ENCODE measurements at regions of chr1 and their contacts with region 1.

Region 1: GRCh38 chr1:47179017-47179987 is 10.5 kb downstream of the PDZK1IP1 start:
- DNase-seq: peak; percentile 91
- H3K4me3 Mint-ChIP-seq: peak overlapping the region; percentile 74
- H3K27ac Mint-ChIP-seq: no peak overlapping the region
- H3K4me1 Mint-ChIP-seq: peaks cover 8% of the 10 kb centered on the region
- H3K27me3 Mint-ChIP-seq: peaks cover 29% of the 10 kb centered on the region

Region 2: GRCh38 chr1:47059376-47059775 is 119.9 kb before region 1 on chr1:
- CTCF ChIA-PET with region 1: no interaction called
- POLR2A ChIA-PET with region 1: no interaction called
- intact Hi-C with region 1: no loop called
- DNase-seq: no peak
- H3K4me3 Mint-ChIP-seq: no peak overlapping the region
- H3K27ac Mint-ChIP-seq: no peak overlapping the region
- H3K4me1 Mint-ChIP-seq: peaks cover 4% of the 10 kb centered on the region
- H3K27me3 Mint-ChIP-seq: peaks cover 32% of the 10 kb centered on the region

Region 3: GRCh38 chr1:47192458-47193384 is 13.4 kb after region 1 on chr1:
- CTCF ChIA-PET with region 1: interaction called, 109 read pairs
- POLR2A ChIA-PET with region 1: interaction called, 6 read pairs
- intact Hi-C with region 1: no loop called
- DNase-seq: peak; percentile 78
- H3K4me3 Mint-ChIP-seq: no peak overlapping the region
- H3K27ac Mint-ChIP-seq: no peak overlapping the region
- H3K4me1 Mint-ChIP-seq: peaks cover 3% of the 10 kb centered on the region
- H3K27me3 Mint-ChIP-seq: peaks cover 5% of the 10 kb centered on the region

Region 4: DNA sequence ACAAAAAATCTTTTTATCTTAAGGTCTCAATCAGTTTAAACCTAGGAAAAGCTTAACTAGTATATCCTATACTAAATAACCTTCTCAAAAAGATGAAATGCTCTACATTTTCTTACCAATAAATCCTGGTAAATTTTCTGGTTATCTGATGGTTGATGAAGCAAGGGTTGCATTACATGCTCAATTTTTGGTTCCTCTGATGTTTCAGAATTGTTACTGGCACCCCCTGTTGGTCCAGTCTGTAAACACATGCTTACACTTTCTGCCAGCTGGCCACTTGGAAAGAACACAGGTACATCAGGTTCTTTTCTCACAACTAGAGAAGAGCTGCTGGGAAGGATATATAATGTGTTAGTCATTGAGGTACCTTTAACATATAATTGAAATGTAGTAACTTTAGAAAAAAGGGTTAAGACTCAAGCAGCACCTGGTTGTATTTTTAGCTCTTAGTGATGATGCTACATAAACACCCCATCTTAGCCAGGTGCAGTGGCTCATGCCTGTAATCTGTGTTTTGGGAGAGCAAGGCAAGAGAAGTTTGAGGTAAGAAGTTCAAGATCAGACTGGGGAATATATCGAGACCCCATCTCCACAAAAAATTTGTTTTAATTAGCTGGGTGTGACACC is 83.6 kb after region 1 on chr1:
- CTCF ChIA-PET with region 1: interaction called, 68 read pairs
- POLR2A ChIA-PET with region 1: no interaction called
- intact Hi-C with region 1: loop called (anchors 1 kb)
- DNase-seq: peak; percentile 46
- H3K4me3 Mint-ChIP-seq: no peak overlapping the region
- H3K27ac Mint-ChIP-seq: no peak overlapping the region
- H3K4me1 Mint-ChIP-seq: no peaks in the 10 kb centered on the region
- H3K27me3 Mint-ChIP-seq: no peaks in the 10 kb centered on the region

Region 5: GRCh38 chr1:47313915-47314664 is 134.8 kb after region 1 on chr1 and contains the start of gene STIL:
- CTCF ChIA-PET with region 1: interaction called, 8 read pairs
- POLR2A ChIA-PET with region 1: no interaction called
- intact Hi-C with region 1: loop called (anchors 10 kb)
- DNase-seq: peak; percentile 99
- H3K4me3 Mint-ChIP-seq: peak within 1 kb of the TSS; percentile 83
- H3K27ac Mint-ChIP-seq: peak within 1 kb of the TSS; percentile 95
- H3K4me1 Mint-ChIP-seq: peaks cover 6% of the 10 kb centered on the region
- H3K27me3 Mint-ChIP-seq: no peaks in the 10 kb centered on the region
- total RNA-seq, gene STIL: 31.3 to 33.6 TPM

Region 6: GRCh38 chr1:47432071-47433036 is 253.1 kb after region 1 on chr1:
- CTCF ChIA-PET with region 1: interaction called, 30 read pairs
- POLR2A ChIA-PET with region 1: no interaction called
- intact Hi-C with region 1: loop called (anchors 5 kb)
- DNase-seq: peak; percentile 77
- H3K4me3 Mint-ChIP-seq: peak overlapping the region; percentile 16
- H3K27ac Mint-ChIP-seq: no peak overlapping the region
- H3K4me1 Mint-ChIP-seq: peaks cover 41% of the 10 kb centered on the region
- H3K27me3 Mint-ChIP-seq: peaks cover 13% of the 10 kb centered on the region

Region 7: GRCh38 chr1:47710329-47711071 is 531.2 kb after region 1 on chr1:
- CTCF ChIA-PET with region 1: interaction called, 17 read pairs
- POLR2A ChIA-PET with region 1: no interaction called
- intact Hi-C with region 1: loop called (anchors 5 kb)
- DNase-seq: peak; percentile 77
- H3K4me3 Mint-ChIP-seq: peak overlapping the region; percentile 18
- H3K27ac Mint-ChIP-seq: no peak overlapping the region
- H3K4me1 Mint-ChIP-seq: peaks cover 7% of the 10 kb centered on the region
- H3K27me3 Mint-ChIP-seq: peaks cover 69% of the 10 kb centered on the region

Region 8: GRCh38 chr1:47849005-47849521 is 669.8 kb after region 1 on chr1:
- CTCF ChIA-PET with region 1: no interaction called
- POLR2A ChIA-PET with region 1: no interaction called
- intact Hi-C with region 1: no loop called
- DNase-seq: no peak
- H3K4me3 Mint-ChIP-seq: no peak overlapping the region
- H3K27ac Mint-ChIP-seq: no peak overlapping the region
- H3K4me1 Mint-ChIP-seq: no peaks in the 10 kb centered on the region
- H3K27me3 Mint-ChIP-seq: no peaks in the 10 kb centered on the region

Measured in activated CD4-positive, alpha-beta memory T cell treated with anti-CD3 and anti-CD28 coated beads for 36 hours (primary cell).